Heart right ventricle (tissue), 16 donors: ENCODE measurements at regions of chr19 and their contacts with region 1.

Region 1: GRCh38 chr19:32691291-32691951 is at the start of gene NUDT19:
- DNase-seq: peak; percentile 85 to 89
- ATAC-seq: peak; percentile 93 to 98 (median 96)
- H3K4me3 ChIP-seq: peak within 1 kb of the TSS; percentile 60 to 84 (median 77)
- H3K27ac ChIP-seq: peak within 1 kb of the TSS; percentile 31 to 96 (median 92)
- H3K4me1 ChIP-seq: peaks cover 6 to 67% (median 50%) of the 10 kb centered on the region in 9 donors
- H3K27me3 ChIP-seq: no peaks in the 10 kb centered on the region
- CTCF ChIP-seq: no peak
- total RNA-seq, gene NUDT19: 16.1 to 27.7 (median 20.5) TPM

Region 2: GRCh38 chr19:32580901-32581703 is 110.3 kb before region 1 on chr19 and contains the start of gene PDCD5:
- intact Hi-C with region 1: loop called in 2 of 10 experiments (anchors 5 to 10 kb)
- DNase-seq: peak; percentile 96 to 98
- ATAC-seq: peak; percentile 97 to 99 (median 98)
- H3K4me3 ChIP-seq: peak within 1 kb of the TSS; percentile 70 to 97 (median 88)
- H3K27ac ChIP-seq: peak within 1 kb of the TSS; percentile 47 to 96 (median 90)
- H3K4me1 ChIP-seq: peaks cover 0 to 25% (median 11%) of the 10 kb centered on the region in 9 donors
- H3K27me3 ChIP-seq: no peaks in the 10 kb centered on the region
- CTCF ChIP-seq: no peak
- total RNA-seq, gene PDCD5: 84.3 to 172 (median 103) TPM

Region 3: DNA sequence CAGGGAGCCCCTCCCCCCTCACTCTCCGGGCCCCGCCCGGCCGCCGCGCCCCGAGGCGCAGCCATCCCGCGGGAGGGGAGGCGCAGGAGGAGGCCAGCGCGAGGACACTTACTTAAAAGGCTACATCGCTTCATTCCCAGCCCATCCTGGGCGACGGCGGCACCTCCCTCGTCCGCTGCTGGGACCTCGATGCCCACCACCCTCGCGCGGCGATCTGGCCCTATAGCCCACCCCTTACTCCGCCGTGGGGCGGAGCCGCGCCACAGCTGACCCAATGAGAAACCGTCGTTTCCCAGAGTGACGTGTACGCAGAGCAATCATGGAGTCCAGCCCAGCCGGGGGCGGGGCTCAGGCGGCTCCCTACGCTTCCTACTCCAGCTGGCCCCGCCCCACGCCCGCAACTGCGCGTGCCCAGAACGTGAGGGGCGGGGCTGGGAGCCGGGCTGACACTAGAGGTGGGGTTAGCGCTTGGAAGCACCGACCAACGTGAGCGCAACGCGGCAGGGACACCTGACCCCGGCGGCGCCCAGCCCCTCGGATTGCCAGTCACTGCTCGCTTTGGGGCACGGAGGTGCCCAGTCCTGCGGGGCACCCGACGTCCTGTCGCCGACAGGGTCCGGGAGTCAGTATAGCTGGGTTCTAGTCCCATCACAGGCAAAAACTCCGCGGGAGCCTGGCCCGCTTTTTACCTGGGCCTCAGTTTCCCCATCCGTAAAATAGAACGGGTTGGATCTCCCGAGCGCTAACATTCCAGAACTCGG is 16.3 kb before region 1 on chr19 and contains the start of gene ANKRD27:
- intact Hi-C with region 1: loop called in 2 of 10 experiments (anchors 2 kb)
- DNase-seq: peak; percentile 97 to 99
- ATAC-seq: peak; percentile 93 to 99 (median 97)
- H3K4me3 ChIP-seq: peak within 1 kb of the TSS; percentile 48 to 97 (median 86)
- H3K27ac ChIP-seq: peak within 1 kb of the TSS in 9 of 10 donors; percentile 81 to 90 (median 85)
- H3K4me1 ChIP-seq: peaks cover 4 to 50% (median 30%) of the 10 kb centered on the region in 9 donors
- H3K27me3 ChIP-seq: peaks cover 0 to 33% (median 8%) of the 10 kb centered on the region in 7 donors
- CTCF ChIP-seq: no peak
- total RNA-seq, gene ANKRD27: 16.6 to 24.5 (median 20.0) TPM

Region 4: DNA sequence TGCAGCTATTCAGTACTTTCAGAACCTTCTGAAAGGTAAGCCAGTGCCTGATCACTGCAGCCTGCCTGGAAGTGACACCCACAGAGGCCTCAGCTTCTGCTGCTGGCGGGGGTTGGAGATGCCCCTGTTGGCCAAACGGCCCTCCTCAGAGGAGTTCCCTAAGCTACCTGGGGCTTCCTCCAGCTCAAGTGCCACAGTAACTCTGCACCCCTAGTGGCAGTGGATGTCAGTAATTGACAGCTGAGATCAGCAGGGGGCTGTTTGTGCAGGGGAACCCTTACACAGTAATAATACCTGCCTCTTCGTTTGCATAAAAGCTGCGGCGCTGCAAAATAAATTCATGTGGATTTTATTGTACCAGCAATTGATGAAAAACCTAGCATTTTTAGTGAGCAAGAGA is 57.1 kb after region 1 on chr19:
- intact Hi-C with region 1: no loop called
- DNase-seq: no peak
- ATAC-seq: no peak
- H3K4me3 ChIP-seq: no peak overlapping the region
- H3K27ac ChIP-seq: no peak overlapping the region
- H3K4me1 ChIP-seq: no peaks in the 10 kb centered on the region
- H3K27me3 ChIP-seq: peaks cover 0 to 53% (median 33%) of the 10 kb centered on the region in 7 donors
- CTCF ChIP-seq: no peak